Activated CD4-positive, alpha-beta memory T cell treated with anti-CD3 and anti-CD28 coated beads for 36 hours (primary cell): ENCODE measurements at regions of chr3 and their contacts with region 1.

Region 1: DNA sequence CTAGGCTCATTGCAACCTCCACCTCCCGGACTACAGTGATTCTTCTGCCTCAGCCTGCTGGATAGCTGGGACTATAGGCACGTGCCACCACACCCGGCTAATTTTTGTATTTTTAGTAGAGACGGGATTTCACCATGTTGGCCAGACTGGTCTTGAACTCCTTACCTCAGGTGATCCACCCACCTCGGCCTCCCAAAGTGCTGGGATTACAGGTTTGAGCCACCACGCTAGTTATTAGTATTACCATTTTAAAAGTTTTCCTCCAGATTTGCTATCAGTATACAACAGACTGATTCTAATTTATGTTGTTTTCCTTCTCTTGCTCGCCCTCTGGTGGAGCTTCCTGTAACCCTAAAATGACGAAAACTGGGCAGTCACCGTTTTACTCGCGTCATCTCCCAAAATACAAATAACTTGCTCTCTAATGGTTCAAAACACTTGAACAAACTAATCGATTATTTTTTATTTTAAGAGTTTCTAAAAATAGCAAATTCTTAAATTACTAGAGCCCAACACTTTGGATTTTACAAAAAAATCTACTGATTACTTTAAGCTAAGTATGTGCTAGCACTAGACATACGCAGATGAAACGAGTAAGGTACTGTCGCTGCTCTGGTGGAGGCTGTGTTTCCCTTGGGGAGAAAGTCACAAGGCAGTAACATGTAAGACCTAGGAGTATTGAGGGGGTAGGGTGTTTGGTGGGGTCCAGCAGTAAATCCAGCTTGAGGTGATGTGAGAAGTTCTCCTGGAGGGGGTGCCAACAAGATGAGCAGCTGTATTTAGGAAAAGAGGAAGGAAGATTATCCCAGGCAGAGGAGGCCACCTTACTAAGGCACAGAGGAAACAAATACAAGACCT is 203.3 kb downstream of the MBNL1 start:
- DNase-seq: peak; percentile 80
- H3K4me3 Mint-ChIP-seq: peak overlapping the region; percentile 39
- H3K27ac Mint-ChIP-seq: peak overlapping the region; percentile 39
- H3K4me1 Mint-ChIP-seq: peaks cover 13% of the 10 kb centered on the region
- H3K27me3 Mint-ChIP-seq: no peaks in the 10 kb centered on the region

Region 2: DNA sequence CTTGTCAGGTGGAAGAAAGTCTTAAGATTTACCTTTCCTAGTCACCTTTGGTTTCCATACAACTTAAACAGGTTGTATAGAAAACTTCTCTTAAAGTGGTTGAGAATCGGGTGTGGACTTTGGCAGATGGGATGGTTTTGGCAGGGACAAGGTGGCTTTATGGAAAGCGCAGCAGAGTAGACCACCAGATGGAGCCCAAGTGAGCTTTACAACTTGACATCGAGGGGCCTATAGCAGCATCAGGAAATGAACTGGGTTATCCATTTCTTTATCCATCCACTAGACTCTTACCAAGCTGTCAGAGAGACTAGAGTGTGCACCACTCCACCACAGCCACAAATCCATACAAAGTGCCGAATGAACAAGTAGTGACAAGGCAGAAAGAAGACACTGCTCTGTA is 288.6 kb before region 1 on chr3:
- CTCF ChIA-PET with region 1: interaction called, 20 read pairs
- POLR2A ChIA-PET with region 1: no interaction called
- intact Hi-C with region 1: loop called (anchors 1 kb)
- DNase-seq: peak; percentile 68
- H3K4me3 Mint-ChIP-seq: peak overlapping the region; percentile 35
- H3K27ac Mint-ChIP-seq: no peak overlapping the region
- H3K4me1 Mint-ChIP-seq: peaks cover 70% of the 10 kb centered on the region
- H3K27me3 Mint-ChIP-seq: no peaks in the 10 kb centered on the region

Region 3: GRCh38 chr3:152524198-152525140 is 52.4 kb after region 1 on chr3:
- CTCF ChIA-PET with region 1: interaction called, 25 read pairs
- POLR2A ChIA-PET with region 1: no interaction called
- intact Hi-C with region 1: loop called (anchors 1 kb)
- DNase-seq: no peak
- H3K4me3 Mint-ChIP-seq: no peak overlapping the region
- H3K27ac Mint-ChIP-seq: no peak overlapping the region
- H3K4me1 Mint-ChIP-seq: no peaks in the 10 kb centered on the region
- H3K27me3 Mint-ChIP-seq: no peaks in the 10 kb centered on the region

Region 4: DNA sequence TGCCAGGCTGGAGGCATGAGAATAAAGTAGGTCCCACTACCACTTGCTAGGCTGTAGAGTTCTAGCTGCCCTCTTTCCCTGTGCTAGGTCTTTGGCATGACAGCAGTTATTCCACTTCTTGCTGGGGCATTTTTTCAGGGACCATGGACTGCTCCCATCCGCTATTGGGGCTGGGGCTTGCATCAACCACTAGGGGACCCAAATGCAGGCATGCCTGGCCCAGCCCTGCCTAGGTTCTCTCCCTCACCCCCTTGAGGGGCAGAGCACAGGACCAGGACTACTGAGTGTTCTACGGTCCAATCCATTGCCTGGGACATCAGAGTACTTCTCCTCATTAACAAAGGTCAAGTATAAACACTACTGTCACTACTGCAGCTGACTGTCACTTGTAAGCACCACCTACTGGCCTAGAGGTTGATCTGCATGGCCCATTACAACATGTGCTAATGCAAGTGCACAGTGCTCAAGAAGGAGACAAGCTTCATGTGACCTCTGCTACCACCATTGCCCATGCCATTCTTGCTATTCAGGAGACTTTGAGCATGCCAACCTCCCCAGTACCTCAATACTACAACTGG is 67.2 kb after region 1 on chr3:
- CTCF ChIA-PET with region 1: no interaction called
- POLR2A ChIA-PET with region 1: no interaction called
- intact Hi-C with region 1: no loop called
- DNase-seq: no peak
- H3K4me3 Mint-ChIP-seq: no peak overlapping the region
- H3K27ac Mint-ChIP-seq: no peak overlapping the region
- H3K4me1 Mint-ChIP-seq: no peaks in the 10 kb centered on the region
- H3K27me3 Mint-ChIP-seq: peaks cover 35% of the 10 kb centered on the region

Region 5: GRCh38 chr3:152574461-152575079 is 102.5 kb after region 1 on chr3:
- CTCF ChIA-PET with region 1: interaction called, 7 read pairs
- POLR2A ChIA-PET with region 1: no interaction called
- intact Hi-C with region 1: loop called (anchors 1 kb)
- DNase-seq: peak; percentile 53
- H3K4me3 Mint-ChIP-seq: no peak overlapping the region
- H3K27ac Mint-ChIP-seq: no peak overlapping the region
- H3K4me1 Mint-ChIP-seq: no peaks in the 10 kb centered on the region
- H3K27me3 Mint-ChIP-seq: no peaks in the 10 kb centered on the region

Region 6: GRCh38 chr3:152628496-152628895 is 156.5 kb after region 1 on chr3:
- CTCF ChIA-PET with region 1: no interaction called
- POLR2A ChIA-PET with region 1: no interaction called
- intact Hi-C with region 1: no loop called
- DNase-seq: no peak
- H3K4me3 Mint-ChIP-seq: no peak overlapping the region
- H3K27ac Mint-ChIP-seq: no peak overlapping the region
- H3K4me1 Mint-ChIP-seq: no peaks in the 10 kb centered on the region
- H3K27me3 Mint-ChIP-seq: no peaks in the 10 kb centered on the region